CD4-positive, alpha-beta memory T cell (primary cell): ENCODE measurements at regions of chr5 and their contacts with region 1.

Region 1: GRCh38 chr5:10761166-10761932 is at the start of gene DAP:
- DNase-seq: peak; percentile 89 to 95 (median 93)
- H3K4me3 ChIP-seq: peak within 1 kb of the TSS; percentile 74 to 75
- H3K4me3 Mint-ChIP-seq: peak within 1 kb of the TSS; percentile 93 to 98 (median 95)
- H3K27ac ChIP-seq: peak within 1 kb of the TSS; percentile 75
- H3K27ac Mint-ChIP-seq: peak within 1 kb of the TSS; percentile 88 to 97 (median 93)
- H3K4me1 ChIP-seq: peaks cover 32% of the 10 kb centered on the region
- H3K4me1 Mint-ChIP-seq: peaks cover 29 to 58% (median 46%) of the 10 kb centered on the region in 4 donors
- H3K27me3 ChIP-seq: no peaks in the 10 kb centered on the region
- H3K27me3 Mint-ChIP-seq: no peaks in the 10 kb centered on the region
- total RNA-seq, gene DAP: 39.0 to 39.5 TPM

Region 2: GRCh38 chr5:10249948-10250803 is 511.2 kb before region 1 on chr5 and contains the start of gene CCT5:
- CTCF ChIA-PET with region 1: no interaction called
- POLR2A ChIA-PET with region 1: interaction called, 8 read pairs
- intact Hi-C with region 1: loop called (anchors 1 kb)
- DNase-seq: peak; percentile 94 to 96 (median 95)
- H3K4me3 ChIP-seq: peak within 1 kb of the TSS; percentile 81 to 99
- H3K4me3 Mint-ChIP-seq: peak within 1 kb of the TSS; percentile 90 to 99 (median 95)
- H3K27ac ChIP-seq: peak within 1 kb of the TSS; percentile 91
- H3K27ac Mint-ChIP-seq: peak within 1 kb of the TSS; percentile 98 to 100 (median 99)
- H3K4me1 ChIP-seq: peaks cover 43% of the 10 kb centered on the region
- H3K4me1 Mint-ChIP-seq: peaks cover 24 to 64% (median 43%) of the 10 kb centered on the region in 4 donors
- H3K27me3 ChIP-seq: no peaks in the 10 kb centered on the region
- H3K27me3 Mint-ChIP-seq: peaks cover 0 to 5% of the 10 kb centered on the region in 2 donors
- total RNA-seq, gene CCT5: 92.7 to 93.3 TPM

Region 3: DNA sequence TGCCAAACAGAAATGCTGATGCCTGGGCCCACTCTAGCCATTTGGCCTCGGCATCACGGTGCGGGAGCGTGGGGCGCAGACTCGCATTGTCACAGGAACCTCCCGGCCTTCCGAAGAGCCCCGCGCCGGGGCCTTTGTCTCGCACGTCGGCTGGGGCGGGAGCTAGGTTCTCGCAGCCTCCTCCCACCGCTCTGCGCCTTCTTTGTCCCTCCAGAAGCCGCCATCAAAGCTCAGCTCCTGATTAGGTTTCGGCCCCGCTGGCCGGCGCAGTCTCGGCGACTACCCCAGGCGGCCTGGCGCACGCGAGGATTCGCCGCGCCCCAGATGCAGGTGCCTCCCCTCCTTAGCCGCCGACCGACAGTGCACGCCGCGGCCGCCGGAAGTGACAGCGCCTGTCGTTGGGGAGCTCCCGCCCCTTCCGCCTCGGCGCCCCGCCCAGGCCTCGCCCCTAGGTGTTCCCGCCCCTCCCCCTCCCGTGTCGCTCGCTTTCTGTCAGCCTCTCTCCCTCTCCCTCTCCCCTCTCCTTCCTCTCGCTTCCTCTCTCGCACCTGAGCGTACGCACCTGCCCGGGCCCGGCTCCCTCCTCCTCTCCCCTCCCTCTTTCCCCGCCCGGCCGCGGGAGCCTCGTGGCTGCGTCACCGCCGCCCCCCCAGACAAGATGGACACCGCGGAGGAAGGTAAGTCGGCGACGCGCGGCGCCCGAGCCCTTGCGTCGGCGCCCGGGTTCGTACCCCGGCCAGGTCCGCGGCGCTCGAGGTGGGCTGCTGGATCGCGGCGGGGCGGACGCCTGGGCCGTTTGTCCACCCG is 407.9 kb before region 1 on chr5 and contains the start of gene MARCHF6:
- CTCF ChIA-PET with region 1: no interaction called
- POLR2A ChIA-PET with region 1: interaction called, 3 read pairs
- intact Hi-C with region 1: loop called (anchors 1 kb)
- DNase-seq: peak; percentile 94 to 97 (median 94)
- H3K4me3 ChIP-seq: peak within 1 kb of the TSS; percentile 85
- H3K4me3 Mint-ChIP-seq: peak within 1 kb of the TSS; percentile 93 to 100 (median 99)
- H3K27ac ChIP-seq: peak within 1 kb of the TSS; percentile 83
- H3K27ac Mint-ChIP-seq: peak within 1 kb of the TSS; percentile 95 to 100 (median 99)
- H3K4me1 ChIP-seq: peaks cover 49% of the 10 kb centered on the region
- H3K4me1 Mint-ChIP-seq: peaks cover 27 to 54% (median 35%) of the 10 kb centered on the region in 4 donors
- H3K27me3 ChIP-seq: no peaks in the 10 kb centered on the region
- H3K27me3 Mint-ChIP-seq: no peaks in the 10 kb centered on the region
- total RNA-seq, gene MARCHF6: 195 to 203 TPM

Region 4: GRCh38 chr5:10441083-10441991 is 320.0 kb before region 1 on chr5 and contains the start of gene ROPN1L:
- CTCF ChIA-PET with region 1: no interaction called
- POLR2A ChIA-PET with region 1: no interaction called
- intact Hi-C with region 1: loop called (anchors 5 kb)
- DNase-seq: peak; percentile 75 to 83 (median 78)
- H3K4me3 ChIP-seq: peak within 1 kb of the TSS; percentile 71 to 89
- H3K4me3 Mint-ChIP-seq: peak within 1 kb of the TSS; percentile 86 to 90 (median 86)
- H3K27ac ChIP-seq: peak within 1 kb of the TSS; percentile 53
- H3K27ac Mint-ChIP-seq: peak within 1 kb of the TSS; percentile 22 to 85 (median 70)
- H3K4me1 ChIP-seq: peaks cover 45% of the 10 kb centered on the region
- H3K4me1 Mint-ChIP-seq: peaks cover 37 to 51% (median 38%) of the 10 kb centered on the region in 4 donors
- H3K27me3 ChIP-seq: no peaks in the 10 kb centered on the region
- H3K27me3 Mint-ChIP-seq: no peaks in the 10 kb centered on the region
- total RNA-seq, gene ROPN1L: 0.42 to 0.47 TPM

Region 5: DNA sequence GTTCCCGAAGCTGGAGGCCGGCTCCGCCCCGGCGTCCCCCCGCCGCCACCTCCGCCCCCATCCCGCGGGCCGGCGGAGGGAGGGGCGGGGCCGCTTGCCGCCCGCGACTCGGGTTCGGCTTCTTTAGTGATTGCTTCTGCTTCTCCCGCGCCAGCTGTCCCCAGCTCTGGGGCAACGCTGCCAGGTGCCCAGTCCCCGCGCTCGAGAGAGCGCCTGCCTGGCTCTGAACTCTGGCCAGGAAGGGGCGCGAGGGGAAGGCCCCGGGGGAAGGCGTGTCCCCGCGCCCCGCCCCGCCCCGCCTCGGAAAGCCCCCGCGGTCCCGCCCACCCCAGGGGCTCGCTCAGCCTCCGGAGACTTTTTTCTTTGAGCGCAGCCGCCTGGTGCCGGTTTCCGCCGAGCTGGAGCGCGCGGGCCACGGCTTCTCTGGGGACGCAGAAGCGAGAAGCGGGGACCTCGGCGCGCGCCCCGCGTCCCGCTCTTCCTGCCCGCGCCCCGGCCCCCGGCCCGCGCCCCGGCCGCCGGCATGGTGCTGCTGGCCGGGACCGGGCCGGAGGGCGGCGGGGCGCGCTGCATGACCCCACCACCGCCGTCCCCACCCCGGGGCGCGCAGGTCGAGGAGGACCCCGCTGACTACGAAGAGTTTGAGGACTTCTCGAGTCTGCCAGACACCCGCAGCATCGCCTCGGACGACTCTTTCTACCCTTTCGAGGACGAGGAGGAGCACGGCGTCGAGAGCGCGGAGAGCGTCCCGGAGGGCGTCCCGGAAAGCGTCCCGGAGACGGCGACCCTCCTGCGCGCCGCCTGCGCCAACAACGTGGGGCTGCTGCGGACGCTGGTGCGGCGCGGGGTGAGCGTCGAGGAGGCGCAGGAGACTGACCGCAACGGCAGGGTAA is 197.2 kb before region 1 on chr5 and contains the start of gene ANKRD33B:
- CTCF ChIA-PET with region 1: no interaction called
- POLR2A ChIA-PET with region 1: no interaction called
- intact Hi-C with region 1: loop called (anchors 2 kb)
- DNase-seq: peak; percentile 74 to 80 (median 77)
- H3K4me3 ChIP-seq: peak within 1 kb of the TSS; percentile 29 to 60
- H3K4me3 Mint-ChIP-seq: peak within 1 kb of the TSS; percentile 84 to 93 (median 88)
- H3K27ac ChIP-seq: peak within 1 kb of the TSS; percentile 74
- H3K27ac Mint-ChIP-seq: peak within 1 kb of the TSS in 5 of 7 donors; percentile 57 to 87 (median 73)
- H3K4me1 ChIP-seq: peaks cover 22% of the 10 kb centered on the region
- H3K4me1 Mint-ChIP-seq: peaks cover 8 to 28% (median 20%) of the 10 kb centered on the region in 4 donors
- H3K27me3 ChIP-seq: no peaks in the 10 kb centered on the region
- H3K27me3 Mint-ChIP-seq: no peaks in the 10 kb centered on the region
- total RNA-seq, gene ANKRD33B: 2.0 to 2.3 TPM

Region 6: GRCh38 chr5:10635257-10635866 is 126.0 kb before region 1 on chr5:
- CTCF ChIA-PET with region 1: no interaction called
- POLR2A ChIA-PET with region 1: no interaction called
- intact Hi-C with region 1: loop called (anchors 10 kb)
- DNase-seq: peak in 4 of 5 donors; percentile 15 to 79 (median 22)
- H3K4me3 ChIP-seq: no peak overlapping the region
- H3K4me3 Mint-ChIP-seq: peak overlapping the region in 7 of 8 donors; percentile 19 to 88 (median 71)
- H3K27ac ChIP-seq: peak overlapping the region; percentile 24
- H3K27ac Mint-ChIP-seq: peak overlapping the region in 6 of 7 donors; percentile 76 to 93 (median 90)
- H3K4me1 ChIP-seq: peaks cover 42% of the 10 kb centered on the region
- H3K4me1 Mint-ChIP-seq: peaks cover 22 to 73% (median 42%) of the 10 kb centered on the region in 4 donors
- H3K27me3 ChIP-seq: no peaks in the 10 kb centered on the region
- H3K27me3 Mint-ChIP-seq: peaks cover 0 to 4% of the 10 kb centered on the region in 2 donors

Region 7: GRCh38 chr5:10712574-10713517 is 48.5 kb before region 1 on chr5:
- CTCF ChIA-PET with region 1: no interaction called
- POLR2A ChIA-PET with region 1: no interaction called
- intact Hi-C with region 1: no loop called
- DNase-seq: no peak
- H3K4me3 ChIP-seq: no peak overlapping the region
- H3K4me3 Mint-ChIP-seq: no peak overlapping the region
- H3K27ac ChIP-seq: no peak overlapping the region
- H3K27ac Mint-ChIP-seq: peak overlapping the region in 3 of 7 donors; percentile 25 to 76 (median 42)
- H3K4me1 ChIP-seq: no peaks in the 10 kb centered on the region
- H3K4me1 Mint-ChIP-seq: peaks cover 4 to 12% (median 10%) of the 10 kb centered on the region in 4 donors
- H3K27me3 ChIP-seq: no peaks in the 10 kb centered on the region
- H3K27me3 Mint-ChIP-seq: no peaks in the 10 kb centered on the region

Region 8: DNA sequence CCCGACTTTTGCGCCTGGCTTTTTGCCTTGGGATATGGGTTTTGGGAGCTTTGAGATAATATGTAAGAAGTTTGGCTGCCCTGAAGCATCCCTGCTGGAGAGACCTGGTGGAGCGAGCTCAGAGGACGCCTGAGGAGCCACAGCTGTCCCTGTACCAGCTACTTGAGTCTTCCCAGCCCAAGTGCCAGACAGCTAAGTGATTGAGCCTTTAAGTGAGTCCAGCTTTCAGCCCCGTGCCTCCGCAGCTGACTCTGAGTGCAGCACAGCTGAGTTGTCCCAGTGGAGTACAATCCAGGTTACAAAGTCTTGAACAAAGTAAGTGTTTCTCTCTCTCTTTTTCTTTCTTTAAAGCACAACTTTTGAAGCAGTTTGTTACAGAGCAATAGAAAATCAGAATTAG is 203.5 kb after region 1 on chr5:
- CTCF ChIA-PET with region 1: no interaction called
- POLR2A ChIA-PET with region 1: no interaction called
- intact Hi-C with region 1: loop called (anchors 5 kb)
- DNase-seq: no peak
- H3K4me3 ChIP-seq: no peak overlapping the region
- H3K4me3 Mint-ChIP-seq: no peak overlapping the region
- H3K27ac ChIP-seq: no peak overlapping the region
- H3K27ac Mint-ChIP-seq: no peak overlapping the region
- H3K4me1 ChIP-seq: peaks cover 10% of the 10 kb centered on the region
- H3K4me1 Mint-ChIP-seq: peaks cover 7 to 19% (median 13%) of the 10 kb centered on the region in 4 donors
- H3K27me3 ChIP-seq: no peaks in the 10 kb centered on the region
- H3K27me3 Mint-ChIP-seq: peaks cover 0 to 1% of the 10 kb centered on the region in 2 donors